ENCODE measurements at regions of chr3 and their contacts with region 1.

Region 1: DNA sequence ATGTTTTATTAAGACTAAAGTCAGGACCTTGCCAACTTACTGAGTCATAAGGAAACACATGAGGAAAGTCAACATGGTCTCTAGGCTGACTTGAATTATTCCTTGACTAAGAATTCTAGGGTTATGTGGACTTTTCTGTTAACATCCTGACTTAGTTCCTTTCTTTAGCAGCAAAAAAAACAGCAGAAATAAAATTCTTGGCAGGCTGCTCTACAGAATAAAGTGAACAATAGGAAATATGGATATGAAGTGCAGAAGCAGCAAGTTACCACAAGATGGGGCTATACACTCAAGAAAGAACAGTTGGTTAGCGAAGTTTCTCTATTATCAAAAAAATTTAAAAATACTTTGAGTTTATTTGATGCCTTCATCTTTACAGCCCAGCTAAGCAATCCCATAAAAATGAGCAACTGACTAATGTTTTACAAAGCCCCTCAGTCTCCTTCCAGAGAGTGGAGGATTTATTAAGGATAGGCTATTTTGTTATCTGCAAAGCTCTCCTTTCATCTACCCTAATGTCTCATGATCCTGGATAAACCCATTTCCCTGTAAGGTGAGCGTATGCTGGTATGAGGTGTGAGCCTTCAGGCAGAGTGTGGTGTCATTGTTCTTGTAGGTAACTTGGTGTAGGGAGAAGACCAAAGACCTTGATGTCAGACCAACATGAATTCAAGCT is 23.1 kb upstream of the MCCC1 start:
- DNase-seq: no peak
- H3K4me3 ChIP-seq: no peak overlapping the region
- H3K27ac ChIP-seq: no peak overlapping the region
- H3K4me1 ChIP-seq: no peaks in the 10 kb centered on the region
- H3K27me3 ChIP-seq: peaks cover 0 to 2% (median 0%) of the 10 kb centered on the region in 3 donors
- CTCF ChIP-seq: peak; percentile 62 to 85 (median 76)
- EP300 ChIP-seq: no peak
- POLR2A ChIP-seq: no peak

Region 2: GRCh38 chr3:183178629-183179549 is 56.5 kb after region 1 on chr3:
- intact Hi-C with region 1: loop called (anchors 5 kb)
- DNase-seq: no peak
- H3K4me3 ChIP-seq: peak overlapping the region; percentile 28 to 53 (median 42)
- H3K27ac ChIP-seq: peak overlapping the region in 1 of 4 donors; percentile 4
- H3K4me1 ChIP-seq: peaks cover 0 to 17% (median 12%) of the 10 kb centered on the region in 4 donors
- H3K27me3 ChIP-seq: peaks cover 10 to 59% (median 26%) of the 10 kb centered on the region in 3 donors
- CTCF ChIP-seq: no peak
- EP300 ChIP-seq: no peak
- POLR2A ChIP-seq: no peak

Region 3: GRCh38 chr3:183210839-183211341 is 88.5 kb after region 1 on chr3:
- intact Hi-C with region 1: no loop called
- DNase-seq: no peak
- H3K4me3 ChIP-seq: no peak overlapping the region
- H3K27ac ChIP-seq: peak overlapping the region in 1 of 4 donors; percentile 47
- H3K4me1 ChIP-seq: no peaks in the 10 kb centered on the region
- H3K27me3 ChIP-seq: no peaks in the 10 kb centered on the region
- CTCF ChIP-seq: no peak
- EP300 ChIP-seq: peak in 1 of 4 donors; percentile 38
- POLR2A ChIP-seq: no peak

Measured in sigmoid colon (tissue), 7 donors.